ENCODE measurements at regions of chr3 and their contacts with region 1.

Region 1: DNA sequence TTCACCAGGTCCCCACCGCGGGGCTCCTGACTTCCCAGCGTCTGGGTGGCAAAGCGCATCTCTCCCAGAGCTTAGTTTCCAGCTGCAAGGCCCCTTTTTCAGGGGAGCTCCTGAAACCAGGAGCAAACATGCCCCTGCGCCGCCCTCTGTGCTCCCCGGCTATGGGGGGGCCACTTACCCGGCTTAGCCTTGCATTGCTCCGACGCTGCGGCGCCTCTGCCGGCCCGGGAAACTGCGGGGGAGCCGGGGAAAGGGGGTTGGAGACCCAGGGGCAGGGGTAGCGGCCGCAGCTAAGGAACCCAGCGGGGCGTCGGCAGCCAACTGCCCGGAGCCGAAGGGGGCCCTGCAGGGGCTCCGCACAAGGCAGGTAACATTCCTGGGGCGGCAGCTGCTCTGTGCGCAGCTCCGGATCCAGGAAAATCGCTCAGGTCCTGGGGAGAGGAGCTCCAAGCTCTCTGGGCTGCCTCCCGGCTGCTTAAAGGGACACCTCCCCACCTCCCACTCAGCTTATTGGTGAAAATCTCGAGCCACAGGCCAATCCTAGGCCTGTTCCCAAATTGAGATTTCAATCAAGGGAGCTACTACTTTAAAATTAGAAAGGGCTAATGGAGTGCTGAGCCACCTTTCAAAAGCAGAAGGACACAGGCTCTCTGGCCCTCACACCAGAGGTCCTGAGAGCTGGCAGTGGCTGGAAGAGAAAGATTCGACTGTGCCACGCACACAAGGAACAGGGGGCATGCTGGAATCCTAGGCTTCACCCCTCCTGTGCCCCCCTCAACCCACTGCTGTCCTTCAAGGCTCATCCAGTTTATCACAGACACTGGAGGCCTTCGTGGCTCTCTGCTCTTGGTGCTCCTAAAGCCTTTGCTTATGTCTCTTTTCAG is 42.7 kb upstream of the PRICKLE2 start:
- DNase-seq: peak; percentile 48
- H3K4me3 ChIP-seq: peak overlapping the region; percentile 52 to 55
- H3K27ac ChIP-seq: peak overlapping the region; percentile 74 to 77
- H3K4me1 ChIP-seq: peaks cover 4% of the 10 kb centered on the region
- H3K27me3 ChIP-seq: no peaks in the 10 kb centered on the region
- CTCF ChIP-seq: no peak
- POLR2A ChIP-seq: peak; percentile 38

Region 2: DNA sequence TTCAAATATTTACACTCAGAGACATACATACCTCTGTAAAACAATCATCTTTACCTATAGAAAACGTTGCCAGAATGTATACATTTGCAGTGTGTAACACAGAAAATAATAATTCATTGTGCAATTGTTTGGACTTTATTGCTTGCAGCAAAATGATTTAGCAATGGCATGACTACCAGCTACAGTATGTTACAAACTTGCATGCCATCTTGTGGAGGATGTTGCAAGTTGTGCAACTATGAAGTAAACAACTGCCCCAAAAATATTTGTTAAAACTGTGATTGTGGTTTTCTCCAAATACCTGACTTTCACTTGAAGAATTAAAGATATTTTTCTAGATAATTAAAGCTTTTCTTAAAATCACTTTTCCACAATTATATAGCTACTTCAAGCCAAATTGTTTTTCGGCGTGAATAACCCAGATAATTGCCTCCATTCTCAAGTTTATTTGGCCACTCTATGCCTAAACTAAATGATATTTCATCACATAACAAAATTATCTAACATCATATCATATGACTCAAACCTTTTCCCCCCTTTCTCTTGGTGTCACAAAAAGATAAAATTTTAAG is 475.9 kb before region 1 on chr3:
- intact Hi-C with region 1: no loop called
- DNase-seq: no peak
- H3K4me3 ChIP-seq: no peak overlapping the region
- H3K27ac ChIP-seq: no peak overlapping the region
- H3K4me1 ChIP-seq: no peaks in the 10 kb centered on the region
- H3K27me3 ChIP-seq: no peaks in the 10 kb centered on the region
- CTCF ChIP-seq: peak in 2 of 4 experiments; percentile 10 to 39
- POLR2A ChIP-seq: no peak

Region 3: GRCh38 chr3:64030741-64031140 is 237.2 kb before region 1 on chr3:
- intact Hi-C with region 1: loop called (anchors 5 kb)
- DNase-seq: peak; percentile 63
- H3K4me3 ChIP-seq: no peak overlapping the region
- H3K27ac ChIP-seq: no peak overlapping the region
- H3K4me1 ChIP-seq: no peaks in the 10 kb centered on the region
- H3K27me3 ChIP-seq: no peaks in the 10 kb centered on the region
- CTCF ChIP-seq: peak; percentile 60 to 92 (median 90)
- POLR2A ChIP-seq: no peak

Region 4: GRCh38 chr3:64138046-64138445 is 129.9 kb before region 1 on chr3:
- intact Hi-C with region 1: no loop called
- DNase-seq: no peak
- H3K4me3 ChIP-seq: no peak overlapping the region
- H3K27ac ChIP-seq: no peak overlapping the region
- H3K4me1 ChIP-seq: no peaks in the 10 kb centered on the region
- H3K27me3 ChIP-seq: no peaks in the 10 kb centered on the region
- CTCF ChIP-seq: no peak
- POLR2A ChIP-seq: no peak

Region 5: DNA sequence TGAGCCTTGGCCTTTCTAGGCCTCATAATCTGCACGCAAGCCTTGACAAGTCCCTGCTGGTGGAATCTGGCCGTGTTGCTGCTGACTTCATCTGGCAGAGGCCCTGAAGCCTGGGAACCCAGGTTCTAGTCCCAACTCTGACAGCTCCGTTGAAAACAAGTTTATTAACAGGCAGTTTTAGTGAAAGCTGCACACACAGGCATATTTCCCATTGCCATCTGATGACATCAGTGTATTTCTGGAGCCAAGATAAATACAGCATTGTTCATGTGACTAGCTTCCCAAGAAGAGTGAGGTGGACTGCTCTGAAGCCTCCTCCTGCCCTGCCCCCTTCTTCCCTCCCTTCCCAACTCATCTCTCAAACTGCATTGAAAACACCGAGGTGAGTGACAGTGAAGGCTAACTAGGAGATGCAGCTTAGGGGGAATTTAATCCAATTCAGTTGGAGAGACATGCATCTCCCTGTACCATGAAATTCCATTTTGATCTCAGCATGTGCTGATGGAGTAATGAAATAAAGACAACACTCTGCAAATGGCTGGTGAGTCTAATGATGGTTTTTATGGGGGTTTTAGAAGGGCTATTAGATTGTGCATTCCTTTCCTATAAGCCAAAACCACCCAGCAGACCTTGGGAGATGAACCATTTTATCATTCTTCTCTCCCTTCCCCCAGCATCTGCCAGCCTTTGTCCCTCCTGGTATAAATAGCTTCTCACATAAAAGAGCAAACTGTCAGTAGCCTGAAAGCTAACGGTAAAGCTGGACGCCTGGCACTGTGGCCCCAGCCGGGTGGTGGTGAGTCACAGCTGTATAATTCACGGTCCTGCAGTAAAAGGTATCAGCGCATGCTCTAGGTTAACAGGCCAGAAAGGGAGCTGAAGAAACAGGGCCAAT is 80.7 kb before region 1 on chr3:
- intact Hi-C with region 1: loop called (anchors 5 kb)
- DNase-seq: peak; percentile 63
- H3K4me3 ChIP-seq: no peak overlapping the region
- H3K27ac ChIP-seq: peak overlapping the region; percentile 33 to 57
- H3K4me1 ChIP-seq: no peaks in the 10 kb centered on the region
- H3K27me3 ChIP-seq: no peaks in the 10 kb centered on the region
- CTCF ChIP-seq: peak in 1 of 4 experiments; percentile 19
- POLR2A ChIP-seq: no peak

Region 6: GRCh38 chr3:64321747-64322146 is 53.8 kb after region 1 on chr3:
- intact Hi-C with region 1: loop called (anchors 5 kb)
- DNase-seq: no peak
- H3K4me3 ChIP-seq: no peak overlapping the region
- H3K27ac ChIP-seq: no peak overlapping the region
- H3K4me1 ChIP-seq: no peaks in the 10 kb centered on the region
- H3K27me3 ChIP-seq: no peaks in the 10 kb centered on the region
- CTCF ChIP-seq: no peak
- POLR2A ChIP-seq: no peak

Region 7: GRCh38 chr3:64399205-64399800 is 131.3 kb after region 1 on chr3:
- intact Hi-C with region 1: loop called (anchors 2 kb)
- DNase-seq: peak; percentile 46
- H3K4me3 ChIP-seq: no peak overlapping the region
- H3K27ac ChIP-seq: no peak overlapping the region
- H3K4me1 ChIP-seq: no peaks in the 10 kb centered on the region
- H3K27me3 ChIP-seq: no peaks in the 10 kb centered on the region
- CTCF ChIP-seq: peak; percentile 65 to 79 (median 73)
- POLR2A ChIP-seq: no peak

Measured in prostate gland (tissue), 2 donors.